Activated CD4-positive, alpha-beta memory T cell treated with anti-CD3 and anti-CD28 coated beads for 36 hours (primary cell): ENCODE measurements at regions of chr15 and their contacts with region 1.

Region 1: GRCh38 chr15:45705510-45706473 is 71.0 kb downstream of the SQOR start:
- DNase-seq: peak; percentile 79
- H3K4me3 Mint-ChIP-seq: peak overlapping the region; percentile 86
- H3K27ac Mint-ChIP-seq: no peak overlapping the region
- H3K4me1 Mint-ChIP-seq: peaks cover 11% of the 10 kb centered on the region
- H3K27me3 Mint-ChIP-seq: peaks cover 4% of the 10 kb centered on the region

Region 2: DNA sequence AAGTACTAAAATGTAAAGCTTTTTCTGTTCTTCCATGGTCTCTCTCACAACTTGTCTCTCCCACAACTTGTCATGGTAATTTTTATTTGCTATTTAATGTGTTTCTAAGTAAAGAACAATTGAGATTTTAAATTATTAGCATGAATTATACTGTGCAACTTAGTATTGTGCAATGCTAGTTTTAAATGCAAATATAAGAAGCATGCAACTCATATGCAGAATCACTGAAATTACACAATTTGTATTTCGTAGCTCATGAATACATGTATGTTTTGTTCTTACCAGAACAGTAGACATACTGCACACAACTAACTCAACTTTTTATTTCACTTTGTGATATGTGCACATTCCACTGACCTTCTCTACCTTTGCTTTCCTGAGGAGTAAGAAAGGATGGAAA is 25.6 kb after region 1 on chr15:
- CTCF ChIA-PET with region 1: interaction called, 12 read pairs
- POLR2A ChIA-PET with region 1: no interaction called
- intact Hi-C with region 1: no loop called
- DNase-seq: no peak
- H3K4me3 Mint-ChIP-seq: no peak overlapping the region
- H3K27ac Mint-ChIP-seq: no peak overlapping the region
- H3K4me1 Mint-ChIP-seq: no peaks in the 10 kb centered on the region
- H3K27me3 Mint-ChIP-seq: peaks cover 9% of the 10 kb centered on the region

Region 3: DNA sequence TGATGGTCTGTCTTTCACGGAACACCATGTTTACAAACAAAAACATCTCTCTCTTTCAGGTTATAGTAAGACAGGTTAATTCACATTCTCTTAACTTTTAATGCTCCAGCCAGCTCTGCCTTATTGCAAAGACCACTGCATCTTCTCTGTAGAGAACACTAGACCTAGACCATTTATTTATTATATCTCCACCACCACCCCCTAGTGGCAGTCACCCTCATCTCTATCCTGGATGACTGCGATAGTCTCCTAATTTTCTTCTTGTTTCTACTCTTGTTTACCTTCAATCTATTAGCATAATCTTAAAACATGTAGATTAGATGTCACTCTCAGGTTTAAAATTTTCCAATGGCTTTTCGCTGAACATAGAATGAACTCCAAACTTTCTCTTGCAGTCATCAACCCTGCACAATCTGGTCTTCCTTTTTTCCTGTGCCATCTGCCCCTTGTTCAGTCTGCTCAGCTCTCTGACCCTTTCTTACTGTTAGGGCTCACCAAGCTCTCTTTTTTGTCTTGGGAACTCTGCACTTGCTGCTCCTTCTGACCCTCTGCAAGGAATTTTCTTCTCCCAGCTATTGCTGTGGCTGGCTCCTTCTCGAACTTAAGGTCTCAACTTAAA is 84.6 kb after region 1 on chr15:
- CTCF ChIA-PET with region 1: interaction called, 27 read pairs
- POLR2A ChIA-PET with region 1: no interaction called
- intact Hi-C with region 1: loop called (anchors 1 kb)
- DNase-seq: peak; percentile 18
- H3K4me3 Mint-ChIP-seq: no peak overlapping the region
- H3K27ac Mint-ChIP-seq: no peak overlapping the region
- H3K4me1 Mint-ChIP-seq: no peaks in the 10 kb centered on the region
- H3K27me3 Mint-ChIP-seq: peaks cover 18% of the 10 kb centered on the region

Region 4: DNA sequence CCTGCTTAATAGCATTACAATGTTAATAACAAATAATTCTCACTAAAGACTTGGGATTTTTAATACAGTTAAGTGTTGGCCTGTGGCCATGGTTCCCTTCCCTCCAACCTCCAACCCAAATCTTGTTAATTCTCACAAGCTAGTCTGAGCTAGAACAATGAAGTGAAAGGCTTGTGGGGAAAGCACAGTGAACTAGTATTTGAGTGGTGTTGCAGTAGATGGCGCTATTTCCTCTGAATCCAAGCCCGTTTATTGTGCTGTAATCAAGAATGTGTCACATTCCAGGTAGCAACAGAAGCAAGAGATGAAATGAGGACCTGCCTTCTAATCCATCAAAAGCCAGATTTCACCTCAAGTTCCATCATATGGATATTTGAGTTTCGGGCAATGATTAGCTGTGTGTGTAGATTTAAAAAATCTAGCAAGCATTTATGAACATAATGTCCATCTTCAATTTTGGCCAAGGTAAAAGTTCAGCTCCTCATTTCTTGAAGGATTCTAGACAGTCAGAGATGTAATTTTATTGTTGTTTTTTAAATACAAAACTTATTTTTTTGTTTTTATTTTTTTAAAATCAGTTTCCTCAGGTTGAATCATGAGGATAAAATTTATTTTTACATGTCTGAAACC is 89.8 kb after region 1 on chr15:
- CTCF ChIA-PET with region 1: interaction called, 27 read pairs
- POLR2A ChIA-PET with region 1: no interaction called
- intact Hi-C with region 1: loop called (anchors 1 kb)
- DNase-seq: peak; percentile 10
- H3K4me3 Mint-ChIP-seq: no peak overlapping the region
- H3K27ac Mint-ChIP-seq: no peak overlapping the region
- H3K4me1 Mint-ChIP-seq: no peaks in the 10 kb centered on the region
- H3K27me3 Mint-ChIP-seq: peaks cover 22% of the 10 kb centered on the region